ENCODE measurements at regions of chr3 and their contacts with region 1.

Region 1: GRCh38 chr3:51995346-51996163 is at the start of gene RPL29:
- DNase-seq: peak; percentile 90
- H3K4me3 ChIP-seq: peak within 1 kb of the TSS; percentile 59 to 96 (median 74)
- H3K27ac ChIP-seq: peak within 1 kb of the TSS; percentile 85
- H3K4me1 ChIP-seq: peaks cover 23% of the 10 kb centered on the region
- H3K27me3 ChIP-seq: no peaks in the 10 kb centered on the region
- CTCF ChIP-seq: no peak
- total RNA-seq, gene RPL29: 1,040 to 1,174 TPM

Region 2: GRCh38 chr3:51799879-51800749 is 195.4 kb before region 1 on chr3:
- CTCF ChIA-PET with region 1: no interaction called
- dilution Hi-C with region 1: no loop called
- in situ Hi-C with region 1: no loop called
- intact Hi-C with region 1: no loop called
- DNase-seq: peak; percentile 65
- H3K4me3 ChIP-seq: no peak overlapping the region
- H3K27ac ChIP-seq: no peak overlapping the region
- H3K4me1 ChIP-seq: peaks cover 10% of the 10 kb centered on the region
- H3K27me3 ChIP-seq: no peaks in the 10 kb centered on the region
- CTCF ChIP-seq: peak; percentile 80 to 90

Region 3: DNA sequence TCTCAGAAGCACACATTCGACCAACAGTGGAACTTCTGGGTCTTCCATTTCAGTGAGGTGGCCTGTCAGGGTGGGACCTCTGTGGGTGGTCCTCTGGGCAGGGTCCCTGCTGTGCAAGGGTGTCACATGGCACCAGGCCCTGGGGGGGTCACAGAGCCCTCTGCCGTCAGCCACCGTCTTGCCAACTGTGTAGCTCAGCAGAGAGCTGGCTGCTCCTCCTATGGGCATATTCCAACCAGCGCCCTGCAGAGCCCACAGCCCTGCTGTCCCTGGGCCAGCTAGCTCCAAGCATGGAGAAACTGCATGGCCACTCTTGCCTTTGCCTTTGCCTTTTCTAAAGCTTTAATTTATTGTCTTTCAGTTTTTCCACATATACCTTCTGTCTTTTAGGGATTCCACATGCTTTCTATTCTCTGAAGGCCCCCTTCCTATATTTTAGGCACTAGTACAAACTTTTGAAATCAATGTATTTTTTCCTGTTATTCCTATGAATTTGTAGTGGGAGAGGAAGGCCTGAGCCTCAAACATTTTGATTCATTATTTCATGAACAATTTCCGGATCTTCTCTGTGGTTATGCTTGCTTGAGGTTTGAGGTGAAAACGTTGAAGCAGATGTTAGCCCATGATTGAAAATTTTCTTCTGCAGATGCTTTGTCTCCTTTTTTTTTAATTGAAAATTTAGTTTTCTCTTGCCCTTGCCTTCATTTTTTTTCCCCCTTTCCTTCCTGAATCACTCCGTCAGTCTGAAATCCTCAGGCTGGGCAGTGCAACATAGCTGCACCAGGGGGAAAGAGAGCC is 104.1 kb before region 1 on chr3:
- CTCF ChIA-PET with region 1: no interaction called
- dilution Hi-C with region 1: no loop called
- in situ Hi-C with region 1: no loop called
- intact Hi-C with region 1: no loop called
- DNase-seq: no peak
- H3K4me3 ChIP-seq: no peak overlapping the region
- H3K27ac ChIP-seq: no peak overlapping the region
- H3K4me1 ChIP-seq: peaks cover 11% of the 10 kb centered on the region
- H3K27me3 ChIP-seq: no peaks in the 10 kb centered on the region
- CTCF ChIP-seq: no peak

Region 4: GRCh38 chr3:51908026-51908425 is 87.5 kb before region 1 on chr3:
- CTCF ChIA-PET with region 1: no interaction called
- dilution Hi-C with region 1: loop called (anchors 5 kb)
- in situ Hi-C with region 1: no loop called
- intact Hi-C with region 1: no loop called
- DNase-seq: peak; percentile 29
- H3K4me3 ChIP-seq: no peak overlapping the region
- H3K27ac ChIP-seq: no peak overlapping the region
- H3K4me1 ChIP-seq: peaks cover 12% of the 10 kb centered on the region
- H3K27me3 ChIP-seq: no peaks in the 10 kb centered on the region
- CTCF ChIP-seq: no peak

Region 5: GRCh38 chr3:52036222-52036694 is 40.7 kb after region 1 on chr3:
- CTCF ChIA-PET with region 1: no interaction called
- dilution Hi-C with region 1: no loop called
- in situ Hi-C with region 1: no loop called
- intact Hi-C with region 1: no loop called
- DNase-seq: no peak
- H3K4me3 ChIP-seq: no peak overlapping the region
- H3K27ac ChIP-seq: no peak overlapping the region
- H3K4me1 ChIP-seq: peaks cover 42% of the 10 kb centered on the region
- H3K27me3 ChIP-seq: no peaks in the 10 kb centered on the region
- CTCF ChIP-seq: no peak

Region 6: DNA sequence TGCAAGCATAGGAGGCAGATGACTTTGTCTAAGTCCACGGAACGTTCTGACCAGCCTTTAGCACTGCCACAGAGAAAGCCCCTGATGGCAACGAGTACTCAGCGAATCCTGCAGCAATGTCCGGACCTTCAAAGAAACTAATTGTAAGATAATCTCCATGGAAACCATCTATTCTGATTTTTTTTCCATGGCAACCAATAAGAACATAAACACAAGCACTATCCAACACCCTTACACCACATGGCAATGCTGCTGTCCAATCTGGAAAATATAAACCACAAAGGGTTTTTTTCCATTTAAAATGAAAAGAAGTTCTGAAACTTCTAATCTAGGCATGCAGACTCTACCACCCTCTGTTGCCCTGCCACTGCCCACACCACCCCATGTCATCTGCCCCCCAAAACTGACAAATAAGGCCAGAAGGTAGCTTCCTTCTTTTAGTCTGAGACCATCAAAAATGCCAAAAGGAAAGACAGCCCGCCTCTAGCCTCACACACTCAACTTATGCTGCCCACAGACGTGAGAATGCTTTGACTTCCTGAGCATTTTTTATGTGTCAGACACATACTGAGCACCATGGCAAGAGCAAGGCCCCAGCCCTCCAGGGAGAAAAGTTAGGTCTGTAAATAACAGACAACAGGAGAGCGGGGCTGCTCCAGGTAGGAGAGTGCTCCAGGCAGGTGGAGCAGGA is 114.2 kb after region 1 on chr3:
- CTCF ChIA-PET with region 1: no interaction called
- dilution Hi-C with region 1: loop called (anchors 10 kb)
- in situ Hi-C with region 1: no loop called
- intact Hi-C with region 1: no loop called
- DNase-seq: no peak
- H3K4me3 ChIP-seq: no peak overlapping the region
- H3K27ac ChIP-seq: no peak overlapping the region
- H3K4me1 ChIP-seq: peaks cover 25% of the 10 kb centered on the region
- H3K27me3 ChIP-seq: no peaks in the 10 kb centered on the region
- CTCF ChIP-seq: no peak

Region 7: GRCh38 chr3:52154117-52155094 is 158.9 kb after region 1 on chr3 and contains the start of gene POC1A:
- CTCF ChIA-PET with region 1: no interaction called
- dilution Hi-C with region 1: loop called (anchors 5 kb)
- in situ Hi-C with region 1: no loop called
- intact Hi-C with region 1: no loop called
- DNase-seq: peak; percentile 97
- H3K4me3 ChIP-seq: peak within 1 kb of the TSS; percentile 58 to 77 (median 73)
- H3K27ac ChIP-seq: peak within 1 kb of the TSS; percentile 55
- H3K4me1 ChIP-seq: peaks cover 19% of the 10 kb centered on the region
- H3K27me3 ChIP-seq: no peaks in the 10 kb centered on the region
- CTCF ChIP-seq: no peak
- total RNA-seq, gene POC1A: 2.8 to 21.5 TPM

Region 8: GRCh38 chr3:52181543-52181942 is 186.0 kb after region 1 on chr3:
- CTCF ChIA-PET with region 1: no interaction called
- dilution Hi-C with region 1: no loop called
- in situ Hi-C with region 1: no loop called
- intact Hi-C with region 1: no loop called
- DNase-seq: peak; percentile 57
- H3K4me3 ChIP-seq: no peak overlapping the region
- H3K27ac ChIP-seq: no peak overlapping the region
- H3K4me1 ChIP-seq: peaks cover 7% of the 10 kb centered on the region
- H3K27me3 ChIP-seq: no peaks in the 10 kb centered on the region
- CTCF ChIP-seq: no peak

Measured in mammary epithelial cell (primary cell).